ENCODE measurements at regions of chr6 and their contacts with region 1.

Region 1: GRCh38 chr6:7238900-7239589 is 74.0 kb downstream of the SSR1 start:
- DNase-seq: peak; percentile 78 to 85 (median 84)
- H3K4me3 ChIP-seq: no peak overlapping the region
- H3K27ac ChIP-seq: no peak overlapping the region
- H3K4me1 ChIP-seq: peaks cover 3 to 60% (median 28%) of the 10 kb centered on the region in 4 experiments
- H3K27me3 ChIP-seq: no peaks in the 10 kb centered on the region

Region 2: GRCh38 chr6:6676910-6677441 is 562.1 kb before region 1 on chr6:
- CTCF ChIA-PET with region 1: interaction called, 11 read pairs
- POLR2A ChIA-PET with region 1: no interaction called
- DNase-seq: peak; percentile 82 to 88 (median 85)
- H3K4me3 ChIP-seq: peak overlapping the region in 1 of 7 experiments; percentile 56
- H3K27ac ChIP-seq: no peak overlapping the region
- H3K4me1 ChIP-seq: peaks cover 4 to 55% (median 30%) of the 10 kb centered on the region in 4 experiments
- H3K27me3 ChIP-seq: no peaks in the 10 kb centered on the region

Region 3: GRCh38 chr6:6712258-6712999 is 526.6 kb before region 1 on chr6:
- CTCF ChIA-PET with region 1: interaction called, 12 read pairs
- POLR2A ChIA-PET with region 1: no interaction called
- DNase-seq: peak; percentile 78 to 91 (median 89)
- H3K4me3 ChIP-seq: peak overlapping the region in 5 of 7 experiments; percentile 4 to 60 (median 41)
- H3K27ac ChIP-seq: peak overlapping the region; percentile 67 to 84
- H3K4me1 ChIP-seq: peaks cover 27 to 69% (median 48%) of the 10 kb centered on the region in 4 experiments
- H3K27me3 ChIP-seq: no peaks in the 10 kb centered on the region

Region 4: GRCh38 chr6:6724539-6725467 is 514.2 kb before region 1 on chr6:
- CTCF ChIA-PET with region 1: interaction called, 20 read pairs
- POLR2A ChIA-PET with region 1: no interaction called
- DNase-seq: peak; percentile 81 to 90 (median 89)
- H3K4me3 ChIP-seq: peak overlapping the region in 6 of 7 experiments; percentile 20 to 62 (median 40)
- H3K27ac ChIP-seq: peak overlapping the region; percentile 13 to 59
- H3K4me1 ChIP-seq: peaks cover 16 to 79% (median 52%) of the 10 kb centered on the region in 4 experiments
- H3K27me3 ChIP-seq: no peaks in the 10 kb centered on the region

Region 5: DNA sequence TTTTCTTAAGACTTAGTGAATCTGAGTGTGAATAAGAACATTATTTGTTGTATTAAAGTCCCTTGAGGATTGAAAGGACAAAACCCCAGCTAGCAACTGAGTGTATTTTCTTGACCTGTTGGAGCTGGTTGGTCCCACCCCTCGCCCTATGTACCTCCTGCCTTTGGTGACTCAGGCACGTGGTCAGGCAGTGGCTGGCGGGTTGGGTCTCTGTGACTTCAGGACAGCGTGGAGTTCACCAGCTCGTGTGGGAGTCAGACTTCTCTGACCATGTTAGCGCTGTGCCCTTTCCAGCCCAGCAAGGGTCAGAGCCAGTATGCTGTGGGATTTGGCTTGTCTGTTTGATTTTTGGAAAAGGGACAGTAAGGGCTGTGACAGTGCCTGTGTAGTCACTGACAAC is 19.7 kb before region 1 on chr6:
- CTCF ChIA-PET with region 1: interaction called, 14 read pairs
- POLR2A ChIA-PET with region 1: no interaction called
- DNase-seq: peak in 1 of 3 donors; percentile 27
- H3K4me3 ChIP-seq: peak overlapping the region in 1 of 7 experiments; percentile 13
- H3K27ac ChIP-seq: no peak overlapping the region
- H3K4me1 ChIP-seq: peaks cover 4 to 25% (median 5%) of the 10 kb centered on the region in 4 experiments
- H3K27me3 ChIP-seq: no peaks in the 10 kb centered on the region

Region 6: DNA sequence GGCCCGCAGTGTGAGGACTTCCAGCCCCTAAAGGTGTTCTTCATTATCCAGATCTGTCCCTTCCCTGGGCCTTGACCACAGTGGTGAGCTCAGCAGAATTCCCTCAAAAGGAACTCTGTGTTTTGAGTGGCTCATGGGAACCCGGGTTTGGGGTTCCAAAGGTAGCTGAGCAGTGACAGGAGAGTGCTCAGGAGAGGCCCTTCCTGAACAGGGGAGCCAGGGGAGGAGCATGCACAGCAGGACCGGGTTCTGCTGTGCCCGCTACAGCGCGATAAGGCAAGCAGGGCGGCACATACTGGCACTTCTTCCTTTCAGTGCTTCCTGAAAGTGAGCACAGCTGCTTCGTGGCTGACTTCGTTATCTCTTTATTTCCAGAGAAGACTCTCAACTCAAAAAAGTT is 14.3 kb before region 1 on chr6:
- CTCF ChIA-PET with region 1: interaction called, 11 read pairs
- POLR2A ChIA-PET with region 1: interaction called, 3 read pairs
- DNase-seq: peak; percentile 68 to 90 (median 79)
- H3K4me3 ChIP-seq: peak overlapping the region in 3 of 7 experiments; percentile 7 to 52 (median 34)
- H3K27ac ChIP-seq: peak overlapping the region in 1 of 2 experiments; percentile 79
- H3K4me1 ChIP-seq: peaks cover 16 to 25% (median 21%) of the 10 kb centered on the region in 4 experiments
- H3K27me3 ChIP-seq: no peaks in the 10 kb centered on the region

Region 7: DNA sequence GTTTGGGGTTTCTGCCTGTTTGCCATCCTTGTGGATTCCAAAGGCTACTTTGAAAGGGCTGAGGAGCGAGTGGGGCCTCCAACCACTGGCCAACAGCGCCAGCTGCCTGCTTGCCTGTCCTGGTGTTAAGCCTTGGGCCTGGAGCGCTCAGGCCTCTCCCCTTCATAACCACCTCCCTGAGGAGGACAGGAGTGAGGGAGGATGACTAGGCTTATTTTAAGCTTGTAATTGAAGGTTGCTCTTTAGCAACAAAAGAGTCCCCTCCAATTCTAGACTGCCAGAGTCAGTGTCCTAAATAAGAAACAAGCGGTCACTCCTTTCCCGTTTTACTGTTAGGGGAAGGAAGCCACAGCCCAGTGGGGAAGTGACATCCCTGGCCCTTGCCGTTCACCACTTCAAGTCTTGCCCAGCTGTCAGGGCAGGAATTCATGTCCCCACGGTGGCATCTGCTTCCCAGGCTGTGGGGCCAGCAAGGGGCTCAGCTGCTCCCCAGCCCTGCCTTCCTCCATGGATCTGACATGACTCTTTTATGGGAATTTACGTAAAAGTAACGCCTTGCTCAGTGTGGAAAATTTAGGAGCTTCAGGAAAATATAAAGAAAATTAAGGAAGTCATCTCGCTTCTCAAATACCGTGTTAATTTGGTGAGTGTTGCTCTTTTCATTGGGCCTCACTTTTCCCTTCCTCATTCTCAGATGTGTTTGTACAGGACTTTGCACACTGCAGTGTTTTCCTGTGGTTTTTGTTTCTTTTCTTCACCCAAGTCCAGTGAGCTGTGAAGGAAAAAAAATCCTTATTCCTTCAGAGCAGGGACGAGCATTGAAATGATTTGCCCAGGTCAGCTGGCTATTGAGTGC is 16.2 kb after region 1 on chr6:
- CTCF ChIA-PET with region 1: interaction called, 38 read pairs
- POLR2A ChIA-PET with region 1: interaction called, 3 read pairs
- DNase-seq: peak; percentile 22 to 65 (median 58)
- H3K4me3 ChIP-seq: peak overlapping the region in 3 of 7 experiments; percentile 28 to 38 (median 37)
- H3K27ac ChIP-seq: peak overlapping the region; percentile 38 to 54
- H3K4me1 ChIP-seq: peaks cover 0 to 40% (median 22%) of the 10 kb centered on the region in 4 experiments
- H3K27me3 ChIP-seq: no peaks in the 10 kb centered on the region

Measured in common myeloid progenitor, CD34-positive (primary cell).